Naive thymus-derived CD4-positive, alpha-beta T cell (primary cell): ENCODE measurements at regions of chr14 and their contacts with region 1.

Region 1: DNA sequence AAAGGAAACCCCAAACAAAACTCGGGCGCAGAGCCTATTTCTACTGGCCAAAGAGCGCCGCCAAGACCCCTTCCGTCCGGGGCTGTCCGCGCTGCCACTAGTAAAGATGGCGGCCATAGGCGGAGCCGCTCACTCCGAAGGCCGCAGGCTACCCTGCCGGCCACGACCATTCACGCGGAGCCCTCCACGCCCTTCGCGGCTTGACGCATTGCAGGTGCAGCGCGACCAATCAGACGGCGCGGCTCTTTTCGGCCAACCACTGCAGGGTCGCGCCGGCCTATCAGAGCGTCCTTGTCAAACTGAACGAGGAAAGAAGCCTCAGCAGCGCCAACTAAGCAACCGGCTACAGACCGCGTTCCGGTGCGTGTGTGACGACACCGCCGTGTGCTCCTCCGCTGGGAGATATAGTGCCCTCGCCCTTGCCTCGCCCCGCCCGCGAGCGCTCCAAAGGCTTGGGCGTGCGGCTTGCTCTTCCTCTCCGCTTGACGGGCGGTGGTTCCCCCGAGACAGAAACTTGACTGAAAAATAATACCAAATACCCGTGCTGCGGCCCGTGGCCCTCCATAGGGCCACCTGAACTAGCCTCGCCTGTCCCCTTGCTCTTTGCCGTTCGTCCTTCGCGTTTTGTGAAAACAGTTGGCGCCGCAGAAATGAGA is 13.6 kb upstream of the CALM1 start:
- DNase-seq: peak; percentile 93 to 98 (median 96)
- ATAC-seq: peak; percentile 91
- H3K4me3 ChIP-seq: peak overlapping the region; percentile 95
- H3K4me3 Mint-ChIP-seq: no peak overlapping the region
- H3K27ac ChIP-seq: peak overlapping the region; percentile 99
- H3K27ac Mint-ChIP-seq: no peak overlapping the region
- H3K4me1 ChIP-seq: peaks cover 18 to 23% of the 10 kb centered on the region in 2 donors
- H3K4me1 Mint-ChIP-seq: peaks cover 20 to 37% (median 26%) of the 10 kb centered on the region in 7 donors
- H3K27me3 ChIP-seq: no peaks in the 10 kb centered on the region
- H3K27me3 Mint-ChIP-seq: peaks cover 0 to 5% (median 0%) of the 10 kb centered on the region in 5 donors

Region 2: DNA sequence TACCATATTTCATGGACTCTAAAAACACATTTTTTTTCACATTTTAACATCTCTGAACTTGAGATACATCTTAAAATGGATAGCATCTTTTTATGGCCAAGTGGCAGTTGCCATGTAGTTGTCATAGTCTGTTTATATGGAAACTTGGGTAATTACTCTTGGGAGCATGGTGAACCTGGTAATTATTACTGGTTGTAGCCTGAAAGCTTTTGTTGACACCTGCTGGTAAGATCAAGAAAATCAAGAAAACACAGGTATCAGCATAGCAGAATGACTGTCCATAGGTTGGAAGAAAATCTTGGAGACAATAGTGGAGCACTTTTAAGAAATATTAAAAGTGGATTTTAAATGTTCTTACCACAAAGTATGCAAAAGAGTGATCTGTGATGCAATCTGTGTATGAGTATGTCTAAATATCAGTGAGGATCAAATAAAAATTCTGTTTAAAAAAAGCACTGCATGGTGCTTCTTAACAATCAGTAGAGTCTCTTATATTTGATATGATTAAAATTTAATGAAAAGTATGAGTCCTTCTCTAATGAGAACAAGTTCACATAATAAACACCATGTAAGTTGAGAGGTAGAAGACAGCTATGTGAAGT is 1514.5 kb before region 1 on chr14:
- CTCF ChIA-PET with region 1: no interaction called
- POLR2A ChIA-PET with region 1: no interaction called
- intact Hi-C with region 1: no loop called
- DNase-seq: peak in 5 of 9 donors; percentile 3 to 27 (median 10)
- ATAC-seq: no peak
- H3K4me3 ChIP-seq: no peak overlapping the region
- H3K4me3 Mint-ChIP-seq: no peak overlapping the region
- H3K27ac ChIP-seq: no peak overlapping the region
- H3K27ac Mint-ChIP-seq: no peak overlapping the region
- H3K4me1 ChIP-seq: no peaks in the 10 kb centered on the region
- H3K4me1 Mint-ChIP-seq: no peaks in the 10 kb centered on the region
- H3K27me3 ChIP-seq: no peaks in the 10 kb centered on the region
- H3K27me3 Mint-ChIP-seq: no peaks in the 10 kb centered on the region

Region 3: GRCh38 chr14:89175881-89176799 is 1207.1 kb before region 1 on chr14:
- CTCF ChIA-PET with region 1: no interaction called
- POLR2A ChIA-PET with region 1: no interaction called
- intact Hi-C with region 1: no loop called
- DNase-seq: no peak
- ATAC-seq: no peak
- H3K4me3 ChIP-seq: no peak overlapping the region
- H3K4me3 Mint-ChIP-seq: no peak overlapping the region
- H3K27ac ChIP-seq: no peak overlapping the region
- H3K27ac Mint-ChIP-seq: peak overlapping the region in 1 of 9 donors; percentile 59
- H3K4me1 ChIP-seq: peaks cover 0 to 4% of the 10 kb centered on the region in 2 donors
- H3K4me1 Mint-ChIP-seq: peaks cover 5 to 30% (median 19%) of the 10 kb centered on the region in 7 donors
- H3K27me3 ChIP-seq: no peaks in the 10 kb centered on the region
- H3K27me3 Mint-ChIP-seq: no peaks in the 10 kb centered on the region

Region 4: DNA sequence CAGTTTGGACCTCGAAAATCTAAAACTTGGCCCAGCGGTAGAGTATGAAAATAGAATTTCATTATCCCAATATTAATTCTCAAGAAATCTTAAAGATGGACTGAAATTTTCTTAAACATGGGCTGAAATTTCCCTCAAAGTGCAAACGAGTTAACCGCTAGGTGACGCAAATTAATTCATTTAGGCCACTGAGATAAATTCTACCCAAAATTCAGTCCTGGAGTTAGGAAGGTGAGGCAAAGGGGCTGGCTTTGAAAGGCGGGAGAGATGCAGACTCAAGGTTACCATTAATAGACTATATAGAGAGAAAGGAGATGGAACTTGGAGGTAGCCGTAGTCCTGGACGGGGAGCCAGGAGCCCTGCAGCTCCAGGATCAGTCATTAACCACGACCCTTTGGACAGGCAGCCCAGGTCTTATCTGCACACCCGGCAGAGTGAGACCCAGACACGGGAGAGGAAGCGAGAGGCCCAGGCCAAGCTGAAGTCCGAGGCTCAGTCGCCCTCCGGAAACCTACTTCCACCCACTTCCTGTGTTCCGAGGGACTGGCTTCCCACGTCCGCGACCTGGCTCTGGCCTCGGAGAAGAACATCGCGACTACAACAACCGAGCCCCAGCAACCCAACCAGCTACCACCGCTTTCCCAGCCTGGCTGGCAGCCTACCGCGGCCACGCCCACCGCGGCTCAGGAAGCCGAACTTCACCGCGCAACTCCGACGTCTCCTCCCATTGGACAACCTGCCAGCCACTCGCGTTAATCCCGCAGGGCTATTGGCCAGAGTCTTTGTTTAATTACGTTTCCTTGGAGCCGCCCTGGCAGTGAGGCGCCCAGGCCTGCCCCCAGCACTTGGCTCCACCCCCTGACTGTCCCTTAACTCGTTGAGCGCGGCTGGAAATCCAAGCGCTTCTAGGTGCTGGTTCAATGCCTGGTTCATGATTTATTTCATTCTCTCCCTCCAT is 428.9 kb before region 1 on chr14 and contains the start of gene EFCAB11:
- CTCF ChIA-PET with region 1: no interaction called
- POLR2A ChIA-PET with region 1: interaction called, 19 read pairs
- intact Hi-C with region 1: loop called (anchors 1 kb)
- DNase-seq: peak; percentile 80 to 98 (median 97)
- ATAC-seq: peak; percentile 90
- H3K4me3 ChIP-seq: peak within 1 kb of the TSS; percentile 72
- H3K4me3 Mint-ChIP-seq: peak within 1 kb of the TSS; percentile 74 to 98 (median 94)
- H3K27ac ChIP-seq: peak within 1 kb of the TSS; percentile 94
- H3K27ac Mint-ChIP-seq: peak within 1 kb of the TSS; percentile 82 to 98 (median 91)
- H3K4me1 ChIP-seq: peaks cover 16 to 21% of the 10 kb centered on the region in 2 donors
- H3K4me1 Mint-ChIP-seq: peaks cover 21 to 54% (median 43%) of the 10 kb centered on the region in 7 donors
- H3K27me3 ChIP-seq: no peaks in the 10 kb centered on the region
- H3K27me3 Mint-ChIP-seq: no peaks in the 10 kb centered on the region
- total RNA-seq, gene EFCAB11: 1.2 to 8.5 (median 1.9) TPM

Region 5: GRCh38 chr14:90345239-90345557 is 38.0 kb before region 1 on chr14:
- CTCF ChIA-PET with region 1: no interaction called
- POLR2A ChIA-PET with region 1: no interaction called
- intact Hi-C with region 1: no loop called
- DNase-seq: no peak
- ATAC-seq: no peak
- H3K4me3 ChIP-seq: no peak overlapping the region
- H3K4me3 Mint-ChIP-seq: no peak overlapping the region
- H3K27ac ChIP-seq: no peak overlapping the region
- H3K27ac Mint-ChIP-seq: no peak overlapping the region
- H3K4me1 ChIP-seq: no peaks in the 10 kb centered on the region
- H3K4me1 Mint-ChIP-seq: peaks cover 0 to 2% (median 0%) of the 10 kb centered on the region in 7 donors
- H3K27me3 ChIP-seq: no peaks in the 10 kb centered on the region
- H3K27me3 Mint-ChIP-seq: peaks cover 0 to 5% (median 0%) of the 10 kb centered on the region in 5 donors

Region 6: DNA sequence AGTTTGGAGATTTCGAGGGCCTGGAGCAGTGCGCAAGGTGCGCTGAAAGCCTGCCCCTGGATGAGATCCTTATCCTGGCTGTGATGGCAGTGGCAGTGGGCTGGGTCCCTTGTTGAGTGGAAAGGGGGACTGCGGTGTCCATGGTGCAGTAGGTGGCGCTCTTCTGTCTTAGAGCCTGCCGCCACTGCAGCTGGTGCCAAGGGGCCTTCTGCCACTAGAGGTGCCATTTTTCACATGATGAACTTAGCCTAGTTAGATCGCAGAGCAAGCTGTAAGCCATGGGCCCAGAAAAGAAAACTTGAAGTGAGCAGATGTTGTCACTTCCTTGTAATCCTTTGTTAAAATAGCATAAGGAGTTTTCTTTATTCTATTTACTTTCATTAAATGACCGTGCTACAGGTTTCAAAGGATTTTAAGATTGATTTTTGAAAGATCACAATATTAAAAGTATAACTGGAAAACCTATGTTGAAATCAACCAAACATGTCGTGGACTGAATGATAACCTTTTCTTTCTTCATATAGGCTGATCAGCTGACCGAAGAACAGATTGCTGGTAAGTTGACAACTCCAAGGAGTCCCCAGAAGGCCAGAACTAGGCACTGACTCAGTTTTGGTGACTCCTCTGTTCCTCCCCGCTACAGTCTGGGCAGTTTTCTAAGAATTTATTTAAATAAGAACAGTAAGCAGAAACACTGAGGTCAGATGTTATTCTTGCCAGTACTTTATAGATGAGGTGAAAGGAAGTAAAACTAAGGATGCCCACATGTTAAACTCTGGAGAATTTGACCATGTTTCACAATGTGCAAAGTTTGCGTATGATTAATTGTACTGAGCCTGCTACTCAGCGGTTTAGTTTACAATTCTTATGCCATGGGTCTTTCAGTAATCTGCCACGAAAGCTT is 16.6 kb after region 1 on chr14:
- CTCF ChIA-PET with region 1: interaction called, 14 read pairs
- POLR2A ChIA-PET with region 1: interaction called, 470 read pairs
- intact Hi-C with region 1: loop called (anchors 1 kb)
- DNase-seq: peak; percentile 60 to 89 (median 85)
- ATAC-seq: peak; percentile 69
- H3K4me3 ChIP-seq: peak overlapping the region; percentile 78
- H3K4me3 Mint-ChIP-seq: peak overlapping the region; percentile 91 to 100 (median 98)
- H3K27ac ChIP-seq: peak overlapping the region; percentile 92
- H3K27ac Mint-ChIP-seq: peak overlapping the region; percentile 38 to 100 (median 99)
- H3K4me1 ChIP-seq: peaks cover 49 to 50% of the 10 kb centered on the region in 2 donors
- H3K4me1 Mint-ChIP-seq: peaks cover 45 to 70% (median 62%) of the 10 kb centered on the region in 7 donors
- H3K27me3 ChIP-seq: no peaks in the 10 kb centered on the region
- H3K27me3 Mint-ChIP-seq: peaks cover 0 to 7% (median 0%) of the 10 kb centered on the region in 5 donors

Region 7: GRCh38 chr14:90475298-90475697 is 92.1 kb after region 1 on chr14:
- CTCF ChIA-PET with region 1: no interaction called
- POLR2A ChIA-PET with region 1: no interaction called
- intact Hi-C with region 1: no loop called
- DNase-seq: no peak
- ATAC-seq: no peak
- H3K4me3 ChIP-seq: no peak overlapping the region
- H3K4me3 Mint-ChIP-seq: no peak overlapping the region
- H3K27ac ChIP-seq: no peak overlapping the region
- H3K27ac Mint-ChIP-seq: no peak overlapping the region
- H3K4me1 ChIP-seq: no peaks in the 10 kb centered on the region
- H3K4me1 Mint-ChIP-seq: no peaks in the 10 kb centered on the region
- H3K27me3 ChIP-seq: no peaks in the 10 kb centered on the region
- H3K27me3 Mint-ChIP-seq: peaks cover 3 to 31% (median 12%) of the 10 kb centered on the region in 5 donors

Region 8: GRCh38 chr14:90758028-90758889 is 375.1 kb after region 1 on chr14:
- CTCF ChIA-PET with region 1: no interaction called
- POLR2A ChIA-PET with region 1: interaction called, 58 read pairs
- intact Hi-C with region 1: loop called (anchors 1 to 5 kb)
- DNase-seq: peak; percentile 83 to 98 (median 92)
- ATAC-seq: peak; percentile 94
- H3K4me3 ChIP-seq: peak overlapping the region; percentile 79
- H3K4me3 Mint-ChIP-seq: peak overlapping the region; percentile 75 to 92 (median 86)
- H3K27ac ChIP-seq: peak overlapping the region; percentile 75
- H3K27ac Mint-ChIP-seq: peak overlapping the region; percentile 80 to 95 (median 90)
- H3K4me1 ChIP-seq: peaks cover 7 to 21% of the 10 kb centered on the region in 2 donors
- H3K4me1 Mint-ChIP-seq: peaks cover 12 to 29% (median 23%) of the 10 kb centered on the region in 7 donors
- H3K27me3 ChIP-seq: no peaks in the 10 kb centered on the region
- H3K27me3 Mint-ChIP-seq: peaks cover 0 to 33% (median 6%) of the 10 kb centered on the region in 5 donors

Region 9: DNA sequence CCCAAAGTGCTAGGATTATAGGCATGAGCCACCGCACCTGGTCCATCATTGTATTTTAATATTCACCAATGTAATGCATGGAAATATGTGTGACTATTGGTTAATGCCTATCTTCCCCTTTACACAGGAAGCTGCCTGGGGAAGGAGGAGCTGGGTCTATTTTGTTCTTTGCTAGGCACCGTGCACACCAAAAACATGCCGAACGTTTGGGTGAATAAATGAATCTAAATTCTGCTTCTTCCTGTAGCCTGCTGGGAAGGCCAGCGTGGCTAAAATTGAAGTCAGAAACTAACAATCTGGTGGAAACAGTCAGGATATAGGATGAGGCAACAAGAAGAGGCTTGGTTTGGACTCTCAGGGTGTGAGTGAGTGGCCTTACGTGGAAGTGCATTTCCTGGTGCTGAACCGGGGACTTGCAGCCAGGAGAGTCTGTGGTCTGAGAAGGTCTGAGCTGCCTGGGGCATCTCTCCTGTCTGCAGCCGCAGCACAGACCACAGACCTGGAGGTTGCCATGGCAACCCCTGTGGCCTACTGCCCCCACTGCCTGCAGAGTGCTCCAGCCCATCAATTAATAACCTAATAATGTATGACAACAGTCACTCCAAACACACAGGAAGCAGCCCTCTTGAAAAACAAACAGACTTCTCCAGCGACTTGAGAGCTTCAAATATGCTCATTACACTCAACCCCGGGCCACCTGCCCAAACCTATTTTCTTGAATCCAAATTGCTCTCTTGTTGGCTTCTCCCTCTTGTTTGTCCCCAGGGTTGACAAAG is 866.8 kb after region 1 on chr14:
- CTCF ChIA-PET with region 1: no interaction called
- POLR2A ChIA-PET with region 1: interaction called, 3 read pairs
- intact Hi-C with region 1: loop called in 1 of 2 experiments (anchors 10 kb)
- DNase-seq: peak in 4 of 9 donors; percentile 20 to 52 (median 40)
- ATAC-seq: peak; percentile 8
- H3K4me3 ChIP-seq: peak overlapping the region; percentile 36
- H3K4me3 Mint-ChIP-seq: peak overlapping the region; percentile 27 to 84 (median 57)
- H3K27ac ChIP-seq: peak overlapping the region; percentile 55
- H3K27ac Mint-ChIP-seq: peak overlapping the region; percentile 53 to 98 (median 91)
- H3K4me1 ChIP-seq: peaks cover 63 to 81% of the 10 kb centered on the region in 2 donors
- H3K4me1 Mint-ChIP-seq: peaks cover 54 to 87% (median 80%) of the 10 kb centered on the region in 7 donors
- H3K27me3 ChIP-seq: no peaks in the 10 kb centered on the region
- H3K27me3 Mint-ChIP-seq: no peaks in the 10 kb centered on the region

Region 10: DNA sequence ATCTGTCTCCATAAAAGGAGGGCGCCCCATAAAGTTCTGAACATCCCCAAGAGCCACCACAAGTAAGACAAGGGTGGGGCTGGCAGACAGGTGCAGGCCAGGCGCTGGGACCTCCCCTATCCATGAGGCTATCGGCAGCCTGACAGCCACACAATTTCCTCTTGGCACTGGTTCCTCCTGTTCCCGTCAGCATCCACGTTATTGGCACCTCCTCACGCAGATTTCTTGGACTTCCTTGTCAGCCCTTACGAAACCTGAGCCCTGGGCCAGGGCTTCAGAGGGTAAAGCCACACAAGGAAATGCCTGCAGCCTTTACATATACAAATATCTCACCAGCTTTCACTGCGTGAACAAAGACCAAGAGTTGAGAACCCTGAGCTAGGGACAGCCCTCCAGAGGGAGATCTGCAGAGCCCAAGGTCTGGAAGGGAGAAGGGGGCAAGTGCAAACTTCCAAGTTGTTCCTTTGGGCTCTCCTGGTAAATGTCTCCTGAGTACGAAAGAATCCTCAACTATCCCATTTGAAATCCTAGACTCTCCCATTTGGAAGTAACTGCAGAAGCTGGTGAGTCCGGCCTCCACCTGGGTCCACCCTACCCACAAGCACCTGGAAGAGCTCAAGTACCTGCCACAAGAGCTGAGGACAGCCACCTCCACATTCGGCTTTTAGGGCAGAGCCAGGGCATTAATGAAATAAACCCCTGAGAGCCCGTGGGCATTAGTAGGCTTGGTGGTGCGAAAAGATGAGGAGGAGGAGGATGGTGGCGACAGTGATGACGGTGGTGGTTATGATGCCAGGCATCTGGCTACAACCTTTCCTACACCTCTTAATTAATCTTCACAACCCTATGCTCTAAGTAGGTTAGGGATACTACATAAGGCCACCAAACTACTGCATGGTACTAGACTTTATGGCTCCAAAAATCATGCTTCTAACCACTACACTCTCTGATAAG is 1489.6 kb after region 1 on chr14:
- CTCF ChIA-PET with region 1: no interaction called
- POLR2A ChIA-PET with region 1: no interaction called
- intact Hi-C with region 1: loop called (anchors 2 to 5 kb)
- DNase-seq: peak in 8 of 9 donors; percentile 32 to 84 (median 78)
- ATAC-seq: peak; percentile 59
- H3K4me3 ChIP-seq: peak overlapping the region; percentile 56
- H3K4me3 Mint-ChIP-seq: peak overlapping the region; percentile 84 to 96 (median 90)
- H3K27ac ChIP-seq: peak overlapping the region; percentile 91
- H3K27ac Mint-ChIP-seq: peak overlapping the region; percentile 95 to 100 (median 99)
- H3K4me1 ChIP-seq: peaks cover 72 to 92% of the 10 kb centered on the region in 2 donors
- H3K4me1 Mint-ChIP-seq: peaks cover 76 to 100% (median 96%) of the 10 kb centered on the region in 7 donors
- H3K27me3 ChIP-seq: no peaks in the 10 kb centered on the region
- H3K27me3 Mint-ChIP-seq: no peaks in the 10 kb centered on the region